A549 (cell line): ENCODE measurements at regions of chr4 and their contacts with region 1.

Region 1: DNA sequence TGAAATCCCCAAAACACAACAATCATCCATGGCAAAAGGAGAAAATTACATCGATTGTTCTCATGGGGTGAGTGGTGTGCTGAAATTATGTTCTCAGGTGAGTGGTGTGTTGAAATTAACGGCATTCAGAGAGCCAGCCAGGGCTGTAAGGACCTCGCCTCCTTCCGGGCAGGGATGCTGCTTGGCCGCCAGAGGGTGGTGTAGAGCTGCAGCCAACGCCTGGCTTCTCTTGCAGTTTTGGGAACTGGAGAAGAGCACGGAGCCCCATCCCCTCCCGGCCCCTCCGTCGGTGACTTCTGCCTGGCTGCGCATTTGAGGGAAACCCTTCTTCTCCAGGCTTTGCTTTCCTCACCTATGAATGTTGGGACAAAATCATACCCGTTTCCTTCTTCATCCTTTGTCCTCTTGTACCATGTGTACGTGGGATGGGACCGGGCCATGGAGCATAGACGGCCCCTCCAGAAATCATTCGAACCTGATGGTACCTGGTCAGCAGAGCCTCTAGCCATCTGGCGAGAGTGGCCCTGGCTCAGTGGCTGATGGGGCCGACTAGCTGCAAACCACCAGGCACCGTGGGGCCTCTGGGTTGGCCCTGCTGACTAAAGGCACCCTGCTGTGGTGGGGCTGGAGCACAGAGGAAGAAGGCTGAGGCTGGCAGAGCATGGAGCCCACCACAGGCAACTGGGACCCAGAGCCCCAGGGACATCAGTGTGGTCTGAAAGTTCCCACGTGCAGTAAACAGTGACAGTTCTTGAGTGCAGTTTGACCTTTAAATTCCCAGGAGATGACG is 28.4 kb downstream of the TRMT44 start:
- DNase-seq: peak; percentile 28 to 53
- ATAC-seq: peak; percentile 83 to 90
- H3K4me3 ChIP-seq: no peak overlapping the region
- H3K27ac ChIP-seq: no peak overlapping the region
- H3K4me1 ChIP-seq: no peaks in the 10 kb centered on the region
- CTCF ChIP-seq: peak; percentile 75
- EP300 ChIP-seq: no peak
- POLR2A ChIP-seq: no peak
- RAD21 ChIP-seq: peak; percentile 78 to 81

Region 2: GRCh38 chr4:8434281-8435073 is 34.5 kb before region 1 on chr4:
- CTCF ChIA-PET with region 1: no interaction called
- POLR2A ChIA-PET with region 1: no interaction called
- DNase-seq: no peak
- ATAC-seq: no peak
- H3K4me3 ChIP-seq: no peak overlapping the region
- H3K27ac ChIP-seq: no peak overlapping the region
- H3K4me1 ChIP-seq: peaks cover 7% of the 10 kb centered on the region; the same call in 1 of the 3 replicates
- CTCF ChIP-seq: no peak
- EP300 ChIP-seq: no peak
- POLR2A ChIP-seq: no peak
- RAD21 ChIP-seq: no peak

Region 3: DNA sequence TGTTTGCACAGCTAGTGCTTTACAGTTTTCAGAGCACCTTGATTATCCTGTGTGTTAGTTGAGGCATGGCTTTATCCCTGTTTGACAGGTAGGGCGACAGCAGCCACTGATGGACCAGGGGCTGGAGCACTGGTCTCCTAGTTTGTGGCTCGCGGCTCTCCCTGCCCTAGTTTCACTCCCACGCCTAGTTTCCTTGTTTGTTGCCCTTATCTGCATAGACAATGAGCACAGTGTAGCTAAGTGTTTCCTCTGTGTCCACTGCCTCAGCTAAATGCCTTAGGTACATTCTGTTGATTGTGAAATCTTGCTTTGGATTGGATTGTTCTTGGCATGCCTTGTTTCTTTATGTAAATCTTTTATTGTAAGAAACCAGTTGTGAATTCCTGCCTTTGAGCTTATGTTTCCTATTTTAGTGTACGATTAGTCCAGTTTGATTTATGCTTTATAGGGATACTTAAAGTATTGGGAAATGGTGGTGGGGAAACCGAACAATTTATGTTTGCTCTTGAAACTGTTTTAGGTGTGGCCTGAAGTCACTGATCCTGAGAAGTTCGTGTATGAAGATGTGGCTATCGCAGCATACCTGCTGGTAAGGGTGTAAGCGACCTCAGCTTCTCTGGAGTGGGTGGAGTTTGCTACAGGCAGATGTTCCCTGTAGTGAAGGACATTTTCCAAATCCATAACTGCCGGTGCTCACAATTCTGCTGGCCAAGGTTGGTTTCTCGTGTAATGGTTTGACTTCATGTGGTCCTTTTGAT is 17.3 kb before region 1 on chr4:
- CTCF ChIA-PET with region 1: interaction called, 39 read pairs
- POLR2A ChIA-PET with region 1: no interaction called
- DNase-seq: no peak
- ATAC-seq: no peak
- H3K4me3 ChIP-seq: no peak overlapping the region
- H3K27ac ChIP-seq: no peak overlapping the region
- H3K4me1 ChIP-seq: no peaks in the 10 kb centered on the region
- CTCF ChIP-seq: no peak
- EP300 ChIP-seq: no peak
- POLR2A ChIP-seq: no peak
- RAD21 ChIP-seq: no peak

Region 4: DNA sequence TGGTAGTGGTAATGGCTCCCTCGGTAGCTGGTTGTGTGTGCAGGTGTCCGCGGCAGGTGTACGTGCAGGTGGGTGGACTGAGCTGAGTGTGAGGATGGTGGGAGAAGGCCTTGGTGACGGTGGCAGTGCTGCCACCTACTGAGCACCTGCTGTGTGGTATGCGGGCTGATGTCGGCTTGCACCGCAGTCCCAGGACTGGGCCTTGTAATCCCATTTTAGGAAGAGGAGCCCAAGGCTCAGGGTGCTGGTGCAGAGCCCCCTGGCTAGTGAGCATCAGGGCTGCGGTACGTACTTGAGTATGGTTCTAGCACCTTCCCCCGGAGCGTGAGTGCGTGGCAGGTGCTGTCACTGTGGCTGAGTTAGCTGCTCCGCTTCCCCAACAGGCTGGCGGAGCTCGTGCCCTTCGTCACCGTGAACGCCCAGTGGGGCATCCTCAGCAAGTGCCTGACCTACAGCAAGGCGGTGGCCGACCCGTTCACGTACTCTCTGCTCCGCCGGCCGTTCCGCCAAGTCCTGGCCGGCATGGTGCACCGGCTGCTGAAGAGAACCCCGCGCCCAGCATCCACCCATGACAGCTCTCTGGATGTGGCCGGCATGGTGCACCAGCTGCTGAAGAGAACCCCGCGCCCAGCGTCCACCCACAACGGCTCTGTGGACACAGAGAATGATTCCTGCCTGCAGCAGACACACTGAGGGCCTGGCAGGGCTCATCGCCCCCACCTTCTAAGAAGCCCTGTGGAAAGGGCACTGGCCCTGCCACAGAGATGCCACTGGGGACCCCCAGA is 117.9 kb after region 1 on chr4:
- CTCF ChIA-PET with region 1: interaction called, 34 read pairs
- POLR2A ChIA-PET with region 1: no interaction called
- DNase-seq: no peak
- ATAC-seq: peak; percentile 52 to 73; a peak in 3 of 6 replicates
- H3K4me3 ChIP-seq: no peak overlapping the region
- H3K27ac ChIP-seq: no peak overlapping the region
- H3K4me1 ChIP-seq: no peaks in the 10 kb centered on the region
- CTCF ChIP-seq: peak; percentile 27; the same call in 2 of the 3 replicates
- EP300 ChIP-seq: no peak
- POLR2A ChIP-seq: no peak
- RAD21 ChIP-seq: peak; percentile 22 to 24; a peak in 2 of 5 replicates

Region 5: DNA sequence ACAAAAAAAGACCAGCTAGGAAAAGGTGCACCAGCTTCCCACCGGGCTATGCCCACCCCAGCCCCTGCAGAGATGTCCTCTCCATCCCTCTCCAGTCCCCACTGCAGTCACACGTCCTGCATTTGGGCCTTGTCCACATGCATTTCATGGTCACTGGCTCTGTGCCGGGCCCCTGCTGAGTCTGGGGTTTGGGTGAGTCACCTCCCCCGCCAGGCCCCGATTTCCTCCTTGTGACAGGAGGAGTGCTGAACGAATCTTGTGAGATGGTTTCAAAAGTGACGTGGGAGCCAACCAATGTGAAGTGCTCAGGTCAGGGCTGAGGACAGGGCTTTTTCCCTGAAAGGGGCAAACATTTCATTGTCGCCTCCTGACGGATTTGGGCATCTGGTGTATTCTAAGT is 130.7 kb after region 1 on chr4:
- CTCF ChIA-PET with region 1: interaction called, 27 read pairs
- POLR2A ChIA-PET with region 1: no interaction called
- DNase-seq: peak in 1 of 2 experiments; percentile 17
- ATAC-seq: no peak
- H3K4me3 ChIP-seq: no peak overlapping the region
- H3K27ac ChIP-seq: no peak overlapping the region
- H3K4me1 ChIP-seq: no peaks in the 10 kb centered on the region
- CTCF ChIP-seq: no peak
- EP300 ChIP-seq: no peak
- POLR2A ChIP-seq: no peak
- RAD21 ChIP-seq: no peak

Region 6: GRCh38 chr4:8917868-8918783 is 449.2 kb after region 1 on chr4:
- CTCF ChIA-PET with region 1: interaction called, 11 read pairs
- POLR2A ChIA-PET with region 1: no interaction called
- DNase-seq: peak; percentile 41 to 58
- ATAC-seq: peak; percentile 81 to 95
- H3K4me3 ChIP-seq: no peak overlapping the region
- H3K27ac ChIP-seq: no peak overlapping the region
- H3K4me1 ChIP-seq: no peaks in the 10 kb centered on the region
- CTCF ChIP-seq: peak; percentile 73
- EP300 ChIP-seq: no peak
- POLR2A ChIP-seq: no peak
- RAD21 ChIP-seq: peak; percentile 82 to 87